ENCODE measurements at regions of chr20 and their contacts with region 1.

Region 1: GRCh38 chr20:53623454-53624211 is 30.0 kb upstream of the ZNF217 start:
- DNase-seq: peak; percentile 32
- H3K4me3 Mint-ChIP-seq: peak overlapping the region; percentile 73
- H3K27ac Mint-ChIP-seq: peak overlapping the region; percentile 95
- H3K4me1 Mint-ChIP-seq: peaks cover 37% of the 10 kb centered on the region
- H3K27me3 Mint-ChIP-seq: no peaks in the 10 kb centered on the region

Region 2: DNA sequence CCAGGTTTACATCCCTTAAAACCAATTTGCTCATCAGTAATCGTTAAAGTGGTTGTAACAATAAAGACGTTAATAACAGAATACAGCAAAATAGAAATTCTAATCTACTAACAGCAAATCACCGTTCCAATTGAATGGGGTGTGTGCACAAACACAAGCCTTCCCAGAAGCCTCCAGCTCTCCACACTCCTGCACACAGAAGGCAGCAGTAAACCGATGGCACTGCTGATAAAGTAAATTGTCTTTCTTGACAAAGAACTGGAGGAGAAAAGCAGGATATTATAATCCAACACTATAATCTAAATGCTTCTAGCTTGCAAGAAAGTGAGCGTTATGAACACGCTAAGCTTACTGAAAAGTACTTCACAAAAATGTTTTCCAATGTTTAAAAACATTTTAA is 37.0 kb before region 1 on chr20:
- intact Hi-C with region 1: loop called (anchors 5 kb)
- DNase-seq: no peak
- H3K4me3 Mint-ChIP-seq: peak overlapping the region; percentile 51
- H3K27ac Mint-ChIP-seq: peak overlapping the region; percentile 73
- H3K4me1 Mint-ChIP-seq: peaks cover 74% of the 10 kb centered on the region
- H3K27me3 Mint-ChIP-seq: no peaks in the 10 kb centered on the region

Region 3: GRCh38 chr20:53597030-53597482 is 26.6 kb before region 1 on chr20:
- intact Hi-C with region 1: no loop called
- DNase-seq: no peak
- H3K4me3 Mint-ChIP-seq: peak overlapping the region; percentile 77
- H3K27ac Mint-ChIP-seq: peak overlapping the region; percentile 91
- H3K4me1 Mint-ChIP-seq: peaks cover 43% of the 10 kb centered on the region
- H3K27me3 Mint-ChIP-seq: no peaks in the 10 kb centered on the region

Region 4: DNA sequence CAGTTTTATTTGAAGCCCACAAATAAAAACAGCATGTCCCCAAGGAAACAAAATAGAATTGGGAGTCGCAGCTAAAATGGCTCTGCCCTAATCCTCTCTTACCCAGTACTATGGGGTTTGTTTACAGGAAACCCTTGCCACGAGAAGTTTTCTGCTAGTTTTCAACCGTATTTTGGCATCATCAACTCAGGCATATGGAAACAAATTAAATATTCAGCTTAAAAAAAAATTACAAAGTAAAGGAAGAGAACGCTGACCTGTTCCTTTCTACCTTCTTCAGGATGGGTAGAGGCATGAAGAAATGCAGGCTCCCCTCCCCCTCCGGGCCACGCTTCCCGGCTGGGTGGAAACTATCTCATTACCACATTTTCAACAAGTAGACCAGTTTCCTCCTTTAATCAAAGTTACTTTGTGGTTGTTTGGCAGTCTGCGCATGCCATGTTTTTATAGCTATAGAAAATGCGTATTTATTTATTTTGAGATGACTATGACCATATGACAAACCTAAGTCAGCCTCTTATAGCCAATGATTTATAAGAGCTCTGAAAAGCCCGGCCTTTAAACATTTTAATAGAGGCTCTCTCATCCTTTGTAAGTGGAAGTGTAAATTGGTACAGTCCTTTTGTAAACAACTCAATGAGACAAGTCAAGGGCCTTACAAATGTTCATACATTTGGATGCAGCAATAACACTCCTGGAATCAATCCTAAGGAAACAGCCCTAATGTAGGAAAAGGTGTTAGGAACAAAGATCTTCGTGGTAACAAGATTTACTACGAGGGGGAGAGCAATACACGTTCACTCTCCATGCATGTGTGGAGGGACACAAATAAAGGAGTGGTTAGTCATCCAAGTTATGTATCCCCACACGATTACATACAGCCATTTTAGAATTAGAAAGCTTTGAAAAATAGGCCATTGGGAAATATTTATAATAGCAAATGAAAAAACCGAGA is 13.9 kb before region 1 on chr20:
- intact Hi-C with region 1: loop called (anchors 1 kb)
- DNase-seq: peak; percentile 72
- H3K4me3 Mint-ChIP-seq: peak overlapping the region; percentile 82
- H3K27ac Mint-ChIP-seq: peak overlapping the region; percentile 97
- H3K4me1 Mint-ChIP-seq: peaks cover 33% of the 10 kb centered on the region
- H3K27me3 Mint-ChIP-seq: no peaks in the 10 kb centered on the region

Region 5: DNA sequence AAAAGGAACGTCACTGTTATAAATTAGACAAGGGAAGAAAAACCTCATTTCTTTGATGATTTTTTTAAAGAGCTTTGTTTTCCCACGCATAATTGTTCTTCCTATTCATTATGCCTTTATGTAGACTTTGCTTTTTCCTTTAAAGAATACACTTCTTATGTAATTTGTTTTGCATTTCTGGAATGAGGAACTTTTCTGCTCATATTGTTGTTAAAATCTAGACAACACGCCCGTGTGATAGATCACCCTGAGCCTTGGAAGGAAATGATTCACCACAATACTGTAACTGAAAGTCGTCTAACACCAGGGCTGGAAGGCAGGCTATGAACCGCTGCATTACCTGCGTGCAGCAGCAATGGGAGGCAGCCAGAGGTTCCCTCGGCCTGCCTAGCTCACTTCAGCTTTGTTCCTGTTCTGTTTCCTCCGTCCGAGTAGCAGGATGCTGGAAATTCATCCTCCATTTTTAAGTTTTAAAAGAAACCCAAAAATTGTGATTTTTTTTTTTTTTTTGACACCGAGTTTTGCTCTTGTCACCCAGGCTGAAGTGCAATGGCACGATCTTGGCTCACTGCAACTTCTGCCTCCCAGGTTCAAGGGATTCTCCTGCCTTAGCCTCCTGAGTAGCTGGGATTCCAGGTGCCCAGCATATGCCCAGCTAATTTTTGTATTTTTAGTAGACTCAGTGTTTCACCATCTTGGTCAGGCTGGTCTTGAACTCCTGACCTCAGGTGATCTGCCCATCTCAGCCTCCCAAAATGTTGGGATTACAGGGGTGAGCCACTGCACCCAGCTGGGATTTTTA is 19.6 kb after region 1 on chr20:
- intact Hi-C with region 1: loop called (anchors 2 kb)
- DNase-seq: peak; percentile 67
- H3K4me3 Mint-ChIP-seq: peak overlapping the region; percentile 76
- H3K27ac Mint-ChIP-seq: peak overlapping the region; percentile 95
- H3K4me1 Mint-ChIP-seq: peaks cover 33% of the 10 kb centered on the region
- H3K27me3 Mint-ChIP-seq: no peaks in the 10 kb centered on the region

Region 6: DNA sequence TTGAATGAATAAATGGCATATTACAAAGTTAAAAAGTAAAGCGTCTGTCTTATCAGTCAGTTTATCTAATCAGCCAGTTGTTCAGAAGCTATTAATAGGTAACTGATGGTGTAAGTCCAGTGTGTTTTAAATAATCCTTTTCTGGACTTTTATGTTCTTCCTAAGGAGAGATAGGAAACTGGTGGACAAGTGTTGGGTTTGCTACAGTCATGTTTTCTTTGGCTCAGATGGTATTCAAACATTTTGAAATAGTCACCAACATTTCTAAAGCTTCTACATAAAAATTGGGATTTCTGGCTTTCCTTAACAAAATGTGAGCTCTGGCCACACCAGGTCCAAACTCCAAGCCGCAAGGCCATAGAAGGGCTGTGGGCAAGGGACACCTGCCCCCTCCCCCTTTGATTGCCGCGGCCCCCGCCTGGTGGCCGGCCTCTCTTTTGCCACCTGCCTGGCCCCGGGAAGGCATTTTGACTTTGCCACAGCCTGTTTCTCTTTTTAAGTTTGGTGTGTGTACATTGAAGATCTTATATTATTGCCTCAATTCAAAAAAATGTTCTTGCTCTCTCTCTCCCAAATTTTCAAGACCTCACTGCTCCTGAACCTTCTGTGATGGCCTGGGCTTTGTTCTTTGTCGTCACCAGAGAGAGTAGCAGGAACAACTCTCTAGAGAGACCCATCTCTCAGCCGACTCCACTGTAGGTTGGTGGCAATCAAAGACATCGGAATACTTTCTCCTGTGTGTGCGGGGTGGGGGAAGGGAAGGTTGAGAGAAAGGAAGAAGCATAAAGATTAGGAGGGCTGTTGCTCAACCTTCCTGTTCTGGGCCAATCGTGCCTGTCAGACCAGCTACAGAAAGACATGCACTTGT is 54.0 kb after region 1 on chr20:
- intact Hi-C with region 1: no loop called
- DNase-seq: no peak
- H3K4me3 Mint-ChIP-seq: peak overlapping the region; percentile 48
- H3K27ac Mint-ChIP-seq: peak overlapping the region; percentile 89
- H3K4me1 Mint-ChIP-seq: peaks cover 26% of the 10 kb centered on the region
- H3K27me3 Mint-ChIP-seq: no peaks in the 10 kb centered on the region

Region 7: DNA sequence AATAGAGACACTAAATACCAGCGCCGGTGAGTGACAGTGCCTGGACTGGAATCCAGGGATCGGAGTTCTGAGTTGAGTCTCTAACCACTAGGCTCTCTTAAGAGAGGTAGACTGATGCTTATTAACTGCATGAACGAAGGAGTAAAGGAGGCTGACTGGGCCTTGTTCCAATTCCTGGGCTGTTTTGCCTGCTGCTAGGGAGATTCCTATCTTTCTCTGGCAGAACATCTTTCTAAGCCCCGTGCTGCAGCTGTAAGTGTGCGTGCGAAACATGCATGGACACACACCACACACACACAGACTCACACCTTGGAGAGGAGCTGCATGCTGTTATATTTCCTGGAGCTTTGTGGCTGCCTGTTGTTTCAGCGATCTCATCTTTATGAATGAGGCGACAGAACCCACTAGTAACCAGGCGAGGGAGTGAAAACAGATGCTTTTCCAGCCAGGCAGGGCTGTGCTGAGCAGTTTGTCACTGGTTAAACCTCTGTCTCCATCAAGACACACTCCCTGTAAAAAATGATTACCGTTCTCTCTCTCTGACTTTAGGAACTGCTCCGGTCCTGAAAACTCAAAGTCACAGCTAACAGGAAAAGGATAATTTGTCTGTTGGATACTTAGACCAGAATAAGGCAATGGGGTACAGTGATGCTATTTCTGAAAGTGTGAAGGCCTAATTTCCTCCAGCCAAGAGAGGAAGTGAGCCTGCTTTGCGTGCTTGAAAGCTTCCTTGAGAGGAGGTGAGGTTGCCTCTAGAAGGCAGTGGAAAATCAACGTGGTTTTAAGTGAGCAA is 127.4 kb after region 1 on chr20:
- intact Hi-C with region 1: no loop called
- DNase-seq: peak; percentile 59
- H3K4me3 Mint-ChIP-seq: peak overlapping the region; percentile 59
- H3K27ac Mint-ChIP-seq: peak overlapping the region; percentile 99
- H3K4me1 Mint-ChIP-seq: peaks cover 63% of the 10 kb centered on the region
- H3K27me3 Mint-ChIP-seq: no peaks in the 10 kb centered on the region

Region 8: DNA sequence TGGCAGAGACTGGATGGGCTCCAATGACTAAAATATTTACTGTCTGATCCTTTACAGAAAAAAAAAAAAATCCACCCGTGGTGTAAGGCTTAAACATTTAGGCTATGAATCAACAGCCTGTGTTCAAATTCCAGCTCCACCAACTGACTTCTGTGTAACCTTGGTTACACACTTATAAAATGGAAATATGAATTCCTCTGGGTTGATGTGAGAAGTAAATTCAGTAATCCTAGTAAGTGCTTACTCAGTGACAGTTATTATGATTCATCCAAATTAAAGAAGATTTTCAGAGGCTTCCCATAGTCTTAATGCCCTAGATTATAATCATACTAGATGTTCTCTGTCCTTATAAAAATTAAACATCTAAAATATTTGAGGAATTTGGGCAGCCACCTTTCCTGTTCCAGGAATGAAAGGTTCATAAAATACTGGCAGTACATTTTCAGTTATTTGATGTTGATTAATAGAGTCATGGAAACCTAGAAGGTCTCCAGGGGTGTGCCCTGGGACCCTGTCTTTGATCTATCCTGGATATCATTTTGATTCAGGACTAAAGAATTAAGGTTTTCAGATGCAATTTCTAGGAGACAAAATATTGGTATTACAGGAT is 150.3 kb after region 1 on chr20:
- intact Hi-C with region 1: no loop called
- DNase-seq: no peak
- H3K4me3 Mint-ChIP-seq: no peak overlapping the region
- H3K27ac Mint-ChIP-seq: no peak overlapping the region
- H3K4me1 Mint-ChIP-seq: peaks cover 5% of the 10 kb centered on the region
- H3K27me3 Mint-ChIP-seq: no peaks in the 10 kb centered on the region